ENCODE measurements at regions of chr11 and their contacts with region 1.

Region 1: GRCh38 chr11:17504330-17505107 is 27.9 kb upstream of the ABCC8 start:
- DNase-seq: peak; percentile 74 to 98 (median 85)

Region 2: GRCh38 chr11:17230867-17231851 is 273.4 kb before region 1 on chr11:
- intact Hi-C with region 1: loop called (anchors 10 kb)
- DNase-seq: no peak

Region 3: GRCh38 chr11:17384002-17384511 is 120.5 kb before region 1 on chr11:
- intact Hi-C with region 1: loop called (anchors 1 kb)
- DNase-seq: peak; percentile 65 to 98 (median 84)

Region 4: DNA sequence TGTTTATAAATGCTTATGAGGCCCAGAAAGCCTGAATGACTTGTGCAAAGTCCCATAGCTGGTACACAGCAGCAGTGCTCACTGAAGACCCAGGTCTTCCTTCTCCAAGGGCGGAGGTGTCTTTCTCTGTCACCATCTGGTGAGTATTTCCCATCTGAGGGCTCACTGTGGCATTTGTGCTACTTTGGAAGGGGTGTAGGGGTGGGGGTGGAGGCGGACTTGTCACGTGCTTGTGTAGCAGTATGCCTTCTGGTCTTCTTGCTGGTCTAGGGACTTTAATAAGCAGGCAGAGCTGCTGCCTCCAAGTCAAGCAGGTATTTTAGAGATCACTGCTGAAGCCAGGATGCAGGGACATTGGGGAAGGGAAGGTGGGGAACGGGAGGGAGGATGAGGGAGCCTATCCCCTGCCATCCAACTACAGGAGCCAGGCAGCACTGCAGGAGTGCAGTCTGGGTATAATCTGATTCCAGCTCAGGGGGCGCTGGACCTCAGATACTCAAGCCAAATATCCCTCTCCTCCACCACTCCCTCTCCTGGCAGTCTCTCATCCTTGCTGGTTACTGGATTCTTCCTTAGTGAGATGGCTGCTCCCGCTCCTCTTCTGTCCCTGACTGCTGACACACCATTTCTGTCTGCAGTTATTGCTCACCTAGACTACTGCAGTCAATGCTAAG is 31.3 kb before region 1 on chr11:
- intact Hi-C with region 1: no loop called
- DNase-seq: peak in 3 of 10 donors; percentile 8 to 20 (median 17)

Region 5: GRCh38 chr11:17650127-17650911 is 145.8 kb after region 1 on chr11:
- intact Hi-C with region 1: no loop called
- DNase-seq: no peak

Region 6: GRCh38 chr11:17760102-17761029 is 255.8 kb after region 1 on chr11:
- intact Hi-C with region 1: no loop called
- DNase-seq: peak in 6 of 10 donors; percentile 27 to 91 (median 52)

Measured in posterior cingulate gyrus (tissue), 11 donors.